IMR-90 (cell line): ENCODE measurements at regions of chr11 and their contacts with region 1.

Region 1: GRCh38 chr11:10735481-10736475 is 15.3 kb upstream of the CTR9 start:
- DNase-seq: peak; percentile 96
- ATAC-seq: peak; percentile 97
- H3K4me3 ChIP-seq: peak overlapping the region; percentile 40; the same call in 1 of the 2 replicates
- H3K27ac ChIP-seq: peak overlapping the region; percentile 93
- H3K4me1 ChIP-seq: peaks cover 8% of the 10 kb centered on the region
- H3K27me3 ChIP-seq: no peaks in the 10 kb centered on the region
- CTCF ChIP-seq: peak; percentile 99
- POLR2A ChIP-seq: no peak; the same call in 1 of the 2 replicates
- RAD21 ChIP-seq: peak; percentile 99

Region 2: GRCh38 chr11:9982800-9983579 is 752.8 kb before region 1 on chr11:
- CTCF ChIA-PET with region 1: no interaction called
- POLR2A ChIA-PET with region 1: no interaction called
- dilution Hi-C with region 1: no loop called
- in situ Hi-C with region 1: loop called (anchors 25 kb)
- intact Hi-C with region 1: no loop called
- DNase-seq: peak; percentile 40
- ATAC-seq: no peak; the same call in 1 of the 2 replicates
- H3K4me3 ChIP-seq: no peak overlapping the region
- H3K27ac ChIP-seq: peak overlapping the region; percentile 35; the same call in 1 of the 2 replicates
- H3K4me1 ChIP-seq: peaks cover 18% of the 10 kb centered on the region
- H3K27me3 ChIP-seq: no peaks in the 10 kb centered on the region
- CTCF ChIP-seq: no peak
- POLR2A ChIP-seq: no peak
- RAD21 ChIP-seq: no peak

Region 3: DNA sequence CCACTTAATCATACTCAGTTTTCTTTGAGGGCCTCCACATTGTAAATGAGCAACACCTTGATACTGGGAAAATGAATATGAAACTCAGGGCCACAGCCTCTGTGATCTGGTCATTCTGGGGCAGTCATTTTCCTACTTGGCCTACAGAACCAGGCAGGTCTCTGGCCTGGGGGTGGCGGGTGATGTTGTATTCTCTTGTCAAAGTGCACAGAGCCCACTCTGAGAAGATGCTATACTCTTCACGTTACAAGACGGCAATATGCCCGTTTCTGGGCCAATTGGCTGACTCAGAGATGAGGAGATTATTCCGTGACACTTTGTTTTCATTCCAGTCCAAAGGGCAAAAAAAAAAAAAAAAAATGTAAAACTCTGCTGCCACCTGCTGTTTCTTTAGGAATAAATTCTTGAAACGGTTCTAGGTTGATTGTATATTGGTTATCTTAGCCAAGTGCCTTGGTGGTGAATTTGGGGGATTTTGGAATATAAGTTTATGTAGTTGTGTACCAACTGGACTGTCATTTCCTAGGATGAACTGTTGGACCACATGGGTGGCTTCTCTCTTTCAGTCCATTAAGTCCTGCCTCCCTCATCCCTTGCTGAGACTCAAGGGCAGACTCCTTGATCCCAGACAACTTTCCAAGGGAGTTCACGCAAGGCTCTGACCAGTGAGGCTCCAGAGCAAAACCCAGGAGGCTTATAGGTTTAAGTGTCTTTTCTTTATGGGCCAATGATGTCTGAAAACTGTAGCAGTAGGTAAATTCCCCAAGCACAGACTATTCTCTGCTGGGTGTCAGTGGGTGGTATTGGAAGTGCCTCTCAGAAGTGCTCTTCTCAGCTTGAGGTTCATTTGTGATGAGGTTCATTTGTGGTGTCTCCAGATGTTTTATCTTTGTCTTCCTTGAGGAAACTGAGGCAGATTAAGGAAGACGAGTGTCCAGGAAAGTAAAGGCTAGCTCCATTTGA is 412.7 kb before region 1 on chr11:
- CTCF ChIA-PET with region 1: no interaction called
- POLR2A ChIA-PET with region 1: no interaction called
- dilution Hi-C with region 1: no loop called
- in situ Hi-C with region 1: no loop called
- intact Hi-C with region 1: loop called (anchors 1 kb)
- DNase-seq: peak; percentile 93
- ATAC-seq: peak; percentile 50
- H3K4me3 ChIP-seq: no peak overlapping the region
- H3K27ac ChIP-seq: peak overlapping the region; percentile 48; the same call in 1 of the 2 replicates
- H3K4me1 ChIP-seq: peaks cover 38% of the 10 kb centered on the region
- H3K27me3 ChIP-seq: no peaks in the 10 kb centered on the region
- CTCF ChIP-seq: peak; percentile 68
- POLR2A ChIP-seq: no peak
- RAD21 ChIP-seq: peak; percentile 67

Region 4: GRCh38 chr11:10514210-10514609 is 221.6 kb before region 1 on chr11:
- CTCF ChIA-PET with region 1: interaction called, 3 read pairs
- POLR2A ChIA-PET with region 1: no interaction called
- dilution Hi-C with region 1: loop called (anchors 25 kb)
- in situ Hi-C with region 1: loop called (anchors 5 kb)
- intact Hi-C with region 1: loop called (anchors 1 kb)
- DNase-seq: peak; percentile 49
- ATAC-seq: no peak
- H3K4me3 ChIP-seq: no peak overlapping the region
- H3K27ac ChIP-seq: no peak overlapping the region
- H3K4me1 ChIP-seq: peaks cover 4% of the 10 kb centered on the region; the same call in 1 of the 2 replicates
- H3K27me3 ChIP-seq: no peaks in the 10 kb centered on the region
- CTCF ChIP-seq: peak; percentile 46
- POLR2A ChIP-seq: no peak
- RAD21 ChIP-seq: peak; percentile 48

Region 5: GRCh38 chr11:10653926-10654810 is 81.6 kb before region 1 on chr11:
- CTCF ChIA-PET with region 1: no interaction called
- POLR2A ChIA-PET with region 1: no interaction called
- dilution Hi-C with region 1: no loop called
- in situ Hi-C with region 1: no loop called
- intact Hi-C with region 1: loop called (anchors 1 kb)
- DNase-seq: peak; percentile 67
- ATAC-seq: peak; percentile 28; the same call in 1 of the 2 replicates
- H3K4me3 ChIP-seq: no peak overlapping the region
- H3K27ac ChIP-seq: no peak overlapping the region
- H3K4me1 ChIP-seq: peaks cover 45% of the 10 kb centered on the region
- H3K27me3 ChIP-seq: no peaks in the 10 kb centered on the region
- CTCF ChIP-seq: peak; percentile 61
- POLR2A ChIP-seq: no peak
- RAD21 ChIP-seq: peak; percentile 77

Region 6: DNA sequence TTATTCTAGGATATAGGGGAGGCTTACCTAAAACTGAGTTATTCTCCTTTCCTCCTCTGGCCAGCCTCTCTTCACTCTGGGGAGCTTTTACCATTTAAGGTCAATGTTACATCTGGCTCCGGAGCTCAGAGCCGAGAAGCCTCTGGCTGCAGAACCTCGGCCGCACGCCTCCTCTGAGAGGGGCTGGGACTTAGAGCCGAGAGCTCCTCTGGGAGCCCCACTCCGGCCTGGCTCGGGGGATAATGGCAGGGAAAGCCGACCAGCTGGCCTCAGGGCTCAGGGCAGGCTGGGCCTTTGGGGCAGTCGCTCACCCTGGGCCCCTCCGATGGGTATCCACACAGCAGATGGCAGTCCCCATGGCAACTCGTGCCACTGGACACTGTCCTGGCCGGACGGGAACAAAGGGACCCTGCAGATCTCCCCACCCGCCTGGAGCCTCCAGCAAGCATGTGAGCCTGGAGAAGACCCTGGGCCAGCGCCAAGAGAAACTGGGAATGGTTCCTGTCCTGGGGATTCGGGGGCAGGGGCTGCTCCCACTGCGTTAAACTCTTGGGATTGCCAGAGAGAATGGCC is 42.2 kb before region 1 on chr11 and contains the start of gene IRAG1:
- CTCF ChIA-PET with region 1: interaction called, 9 read pairs
- POLR2A ChIA-PET with region 1: interaction called, 4 read pairs
- dilution Hi-C with region 1: no loop called
- in situ Hi-C with region 1: no loop called
- intact Hi-C with region 1: loop called (anchors 1 kb)
- DNase-seq: peak; percentile 78
- ATAC-seq: peak; percentile 81
- H3K4me3 ChIP-seq: peak within 1 kb of the TSS; percentile 61
- H3K27ac ChIP-seq: peak within 1 kb of the TSS; percentile 98
- H3K4me1 ChIP-seq: peaks cover 46% of the 10 kb centered on the region
- H3K27me3 ChIP-seq: no peaks in the 10 kb centered on the region
- CTCF ChIP-seq: no peak
- POLR2A ChIP-seq: 0 out of 2 replicates have a peak, but pooled peaks have one; percentile 19
- RAD21 ChIP-seq: no peak
- total RNA-seq, gene IRAG1: 21.1 and 25.8 TPM in 2 replicates

Region 7: GRCh38 chr11:10778217-10778970 is 42.6 kb after region 1 on chr11:
- CTCF ChIA-PET with region 1: no interaction called
- POLR2A ChIA-PET with region 1: no interaction called
- dilution Hi-C with region 1: no loop called
- in situ Hi-C with region 1: no loop called
- intact Hi-C with region 1: no loop called
- DNase-seq: peak; percentile 95
- ATAC-seq: peak; percentile 85
- H3K4me3 ChIP-seq: no peak overlapping the region
- H3K27ac ChIP-seq: peak overlapping the region; percentile 68
- H3K4me1 ChIP-seq: peaks cover 10% of the 10 kb centered on the region
- H3K27me3 ChIP-seq: no peaks in the 10 kb centered on the region
- CTCF ChIP-seq: no peak
- POLR2A ChIP-seq: peak; percentile 74; the same call in 1 of the 2 replicates
- RAD21 ChIP-seq: no peak